PC-9 (cell line): ENCODE measurements at regions of chr12 and their contacts with region 1.

Region 1: DNA sequence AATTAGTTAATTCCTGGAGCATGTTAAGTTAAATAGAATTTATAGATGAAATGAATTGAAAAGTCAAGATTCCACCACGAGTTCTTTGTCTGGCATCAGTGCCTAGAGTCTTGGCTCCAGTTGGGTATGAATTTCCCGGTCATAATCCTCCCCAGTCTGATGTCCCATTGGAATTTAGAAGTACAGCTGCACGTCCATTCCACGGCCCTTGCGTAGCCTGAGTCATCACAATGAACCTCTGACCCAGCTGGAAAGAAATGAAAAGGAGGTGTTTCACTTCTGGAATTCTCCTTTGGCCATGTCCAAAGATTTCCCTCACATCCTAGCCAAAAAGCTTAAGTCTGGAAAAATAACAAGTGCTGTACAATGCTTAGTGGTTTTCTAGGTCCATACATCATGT is 122.7 kb downstream of the KICS2 start:
- DNase-seq: peak in 1 of 2 experiments; percentile 23
- H3K4me3 ChIP-seq: no peak overlapping the region
- H3K27ac ChIP-seq: no peak overlapping the region
- H3K4me1 ChIP-seq: no peaks in the 10 kb centered on the region; the same call in 1 of the 2 replicates
- H3K27me3 ChIP-seq: no peaks in the 10 kb centered on the region
- CTCF ChIP-seq: no peak

Region 2: DNA sequence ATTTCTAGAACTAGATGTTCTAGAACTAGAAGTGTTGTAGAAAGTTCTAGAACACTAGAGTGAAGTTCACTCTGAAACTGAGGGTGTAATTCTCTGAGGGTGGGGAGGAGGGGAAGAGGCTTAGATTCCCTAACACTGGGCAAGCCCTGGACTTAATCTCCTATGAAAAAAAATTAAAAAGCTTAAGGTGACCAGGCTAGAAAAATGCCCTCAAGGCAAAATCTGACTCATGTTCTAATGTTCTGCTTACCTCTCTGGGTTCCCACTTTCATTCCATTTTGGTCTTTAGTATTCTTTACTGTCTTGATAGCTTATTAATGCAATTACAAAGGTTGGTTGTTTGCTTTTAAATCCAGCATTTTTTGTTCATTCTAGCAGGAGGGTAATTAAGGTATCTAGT is 21.2 kb after region 1 on chr12:
- CTCF ChIA-PET with region 1: no interaction called
- POLR2A ChIA-PET with region 1: interaction called, 16 read pairs
- intact Hi-C with region 1: no loop called
- DNase-seq: peak; percentile 38 to 80
- H3K4me3 ChIP-seq: no peak overlapping the region
- H3K27ac ChIP-seq: peak overlapping the region; percentile 54
- H3K4me1 ChIP-seq: peaks cover 23% of the 10 kb centered on the region
- H3K27me3 ChIP-seq: no peaks in the 10 kb centered on the region
- CTCF ChIP-seq: no peak

Region 3: GRCh38 chr12:64373193-64373592 is 273.8 kb after region 1 on chr12:
- CTCF ChIA-PET with region 1: no interaction called
- POLR2A ChIA-PET with region 1: no interaction called
- intact Hi-C with region 1: no loop called
- DNase-seq: no peak
- H3K4me3 ChIP-seq: no peak overlapping the region
- H3K27ac ChIP-seq: no peak overlapping the region
- H3K4me1 ChIP-seq: no peaks in the 10 kb centered on the region
- H3K27me3 ChIP-seq: no peaks in the 10 kb centered on the region
- CTCF ChIP-seq: no peak